ENCODE measurements at regions of chr10 and their contacts with region 1.

Region 1: DNA sequence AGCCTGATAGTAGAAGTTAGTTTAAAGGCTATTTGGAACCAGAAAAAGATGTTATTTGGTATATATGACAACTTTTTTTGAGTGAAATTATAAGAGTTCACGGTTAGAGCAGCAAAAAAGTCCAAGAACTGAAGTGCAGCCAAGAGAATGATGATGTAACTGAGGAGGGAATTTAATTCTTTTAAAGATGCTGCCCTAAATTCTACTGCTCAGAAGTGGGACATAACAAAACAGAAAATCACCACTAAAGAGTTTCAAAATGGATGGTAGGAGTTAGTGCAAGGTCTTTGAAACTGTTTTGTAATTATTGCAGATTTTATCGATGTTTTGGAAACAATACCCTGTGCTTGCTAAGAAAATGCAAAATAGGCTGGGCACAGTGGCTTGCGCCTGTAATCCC is 6.5 kb downstream of the SAMD8 start:
- DNase-seq: no peak
- ATAC-seq: no peak
- H3K4me3 ChIP-seq: no peak overlapping the region
- H3K4me3 Mint-ChIP-seq: no peak overlapping the region
- H3K27ac ChIP-seq: no peak overlapping the region
- H3K27ac Mint-ChIP-seq: peak overlapping the region in 1 of 2 donors; percentile 39
- H3K4me1 ChIP-seq: peaks cover 5 to 10% of the 10 kb centered on the region in 2 experiments
- H3K4me1 Mint-ChIP-seq: peaks cover 34 to 48% (median 47%) of the 10 kb centered on the region in 3 donors
- H3K27me3 ChIP-seq: no peaks in the 10 kb centered on the region
- H3K27me3 Mint-ChIP-seq: no peaks in the 10 kb centered on the region

Region 2: GRCh38 chr10:75048669-75049098 is 69.3 kb before region 1 on chr10:
- CTCF ChIA-PET with region 1: no interaction called
- POLR2A ChIA-PET with region 1: no interaction called
- DNase-seq: no peak
- ATAC-seq: no peak
- H3K4me3 ChIP-seq: no peak overlapping the region
- H3K4me3 Mint-ChIP-seq: no peak overlapping the region
- H3K27ac ChIP-seq: no peak overlapping the region
- H3K27ac Mint-ChIP-seq: no peak overlapping the region
- H3K4me1 ChIP-seq: peaks cover 0 to 10% of the 10 kb centered on the region in 2 experiments
- H3K4me1 Mint-ChIP-seq: peaks cover 8 to 12% (median 8%) of the 10 kb centered on the region in 3 donors
- H3K27me3 ChIP-seq: peaks cover 0 to 13% of the 10 kb centered on the region in 2 experiments
- H3K27me3 Mint-ChIP-seq: peaks cover 3 to 6% of the 10 kb centered on the region in 2 donors

Region 3: GRCh38 chr10:75159519-75159918 is 41.5 kb after region 1 on chr10:
- CTCF ChIA-PET with region 1: no interaction called
- POLR2A ChIA-PET with region 1: interaction called in 1 of 2 experiments, 13 read pairs
- DNase-seq: no peak
- ATAC-seq: no peak
- H3K4me3 ChIP-seq: no peak overlapping the region
- H3K4me3 Mint-ChIP-seq: no peak overlapping the region
- H3K27ac ChIP-seq: no peak overlapping the region
- H3K27ac Mint-ChIP-seq: peak overlapping the region; percentile 44 to 71
- H3K4me1 ChIP-seq: peaks cover 0 to 4% of the 10 kb centered on the region in 2 experiments
- H3K4me1 Mint-ChIP-seq: peaks cover 14 to 31% (median 26%) of the 10 kb centered on the region in 3 donors
- H3K27me3 ChIP-seq: no peaks in the 10 kb centered on the region
- H3K27me3 Mint-ChIP-seq: no peaks in the 10 kb centered on the region

Region 4: GRCh38 chr10:75593692-75594556 is 475.9 kb after region 1 on chr10:
- CTCF ChIA-PET with region 1: no interaction called
- POLR2A ChIA-PET with region 1: no interaction called
- DNase-seq: no peak
- ATAC-seq: no peak
- H3K4me3 ChIP-seq: no peak overlapping the region
- H3K4me3 Mint-ChIP-seq: no peak overlapping the region
- H3K27ac ChIP-seq: no peak overlapping the region
- H3K27ac Mint-ChIP-seq: no peak overlapping the region
- H3K4me1 ChIP-seq: no peaks in the 10 kb centered on the region
- H3K4me1 Mint-ChIP-seq: no peaks in the 10 kb centered on the region
- H3K27me3 ChIP-seq: peaks cover 0 to 13% of the 10 kb centered on the region in 2 experiments
- H3K27me3 Mint-ChIP-seq: peaks cover 4 to 12% of the 10 kb centered on the region in 2 donors